A673 (cell line): ENCODE measurements at regions of chr7 and their contacts with region 1.

Region 1: GRCh38 chr7:77740257-77740656 is 44.0 kb downstream of the RSBN1L start:
- DNase-seq: no peak
- H3K4me3 ChIP-seq: no peak overlapping the region
- H3K27ac ChIP-seq: no peak overlapping the region
- H3K4me1 ChIP-seq: no peaks in the 10 kb centered on the region
- H3K27me3 ChIP-seq: no peaks in the 10 kb centered on the region
- CTCF ChIP-seq: no peak

Region 2: DNA sequence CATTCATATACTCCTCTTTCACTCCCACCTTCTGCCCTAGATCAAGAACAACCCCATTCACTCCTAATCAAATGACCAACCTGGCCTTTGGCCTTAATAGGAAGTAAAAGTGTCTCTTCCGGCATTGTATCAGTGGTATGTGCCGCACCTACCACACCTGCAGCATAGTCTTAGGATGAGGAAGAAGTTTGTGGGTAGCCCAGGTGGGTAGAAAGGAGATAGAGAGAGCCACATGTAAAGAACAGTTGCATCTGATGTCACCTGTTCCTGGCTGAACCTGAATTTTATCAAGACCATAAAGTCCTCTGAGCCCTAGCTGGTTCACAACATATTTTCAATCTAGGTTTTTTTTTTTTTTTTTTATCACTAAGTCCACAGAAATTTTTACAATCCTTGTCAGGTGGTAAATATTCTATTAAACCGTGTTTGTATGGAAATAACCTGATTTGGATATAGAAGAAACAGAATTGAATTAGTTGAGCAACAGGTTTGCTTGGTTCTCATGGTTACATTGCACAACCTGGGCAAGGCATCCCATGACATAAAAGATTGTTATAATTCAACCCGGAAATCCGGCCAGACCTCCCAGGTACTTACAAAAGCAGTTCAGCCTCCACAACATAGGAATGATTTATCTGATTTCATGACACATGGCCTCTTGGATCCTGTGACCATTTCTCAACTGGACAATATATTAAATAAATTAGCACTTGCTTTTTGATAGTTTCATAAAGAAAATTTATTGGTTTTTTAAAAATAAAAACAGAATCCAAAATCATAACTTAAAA is 258.4 kb before region 1 on chr7:
- CTCF ChIA-PET with region 1: no interaction called
- POLR2A ChIA-PET with region 1: no interaction called
- intact Hi-C with region 1: no loop called
- DNase-seq: peak; percentile 17
- H3K4me3 ChIP-seq: no peak overlapping the region
- H3K27ac ChIP-seq: no peak overlapping the region
- H3K4me1 ChIP-seq: no peaks in the 10 kb centered on the region
- H3K27me3 ChIP-seq: peaks cover 4% of the 10 kb centered on the region
- CTCF ChIP-seq: no peak

Region 3: GRCh38 chr7:77696198-77697028 is 43.8 kb before region 1 on chr7 and contains the start of gene RSBN1L:
- CTCF ChIA-PET with region 1: no interaction called
- POLR2A ChIA-PET with region 1: interaction called, 3 read pairs
- intact Hi-C with region 1: loop called (anchors 5 kb)
- DNase-seq: peak; percentile 98
- H3K4me3 ChIP-seq: peak within 1 kb of the TSS; percentile 97
- H3K27ac ChIP-seq: peak within 1 kb of the TSS; percentile 94
- H3K4me1 ChIP-seq: peaks cover 15% of the 10 kb centered on the region
- H3K27me3 ChIP-seq: no peaks in the 10 kb centered on the region
- CTCF ChIP-seq: peak; percentile 50
- total RNA-seq, gene RSBN1L: 22.4 and 23.2 TPM in 2 replicates

Region 4: DNA sequence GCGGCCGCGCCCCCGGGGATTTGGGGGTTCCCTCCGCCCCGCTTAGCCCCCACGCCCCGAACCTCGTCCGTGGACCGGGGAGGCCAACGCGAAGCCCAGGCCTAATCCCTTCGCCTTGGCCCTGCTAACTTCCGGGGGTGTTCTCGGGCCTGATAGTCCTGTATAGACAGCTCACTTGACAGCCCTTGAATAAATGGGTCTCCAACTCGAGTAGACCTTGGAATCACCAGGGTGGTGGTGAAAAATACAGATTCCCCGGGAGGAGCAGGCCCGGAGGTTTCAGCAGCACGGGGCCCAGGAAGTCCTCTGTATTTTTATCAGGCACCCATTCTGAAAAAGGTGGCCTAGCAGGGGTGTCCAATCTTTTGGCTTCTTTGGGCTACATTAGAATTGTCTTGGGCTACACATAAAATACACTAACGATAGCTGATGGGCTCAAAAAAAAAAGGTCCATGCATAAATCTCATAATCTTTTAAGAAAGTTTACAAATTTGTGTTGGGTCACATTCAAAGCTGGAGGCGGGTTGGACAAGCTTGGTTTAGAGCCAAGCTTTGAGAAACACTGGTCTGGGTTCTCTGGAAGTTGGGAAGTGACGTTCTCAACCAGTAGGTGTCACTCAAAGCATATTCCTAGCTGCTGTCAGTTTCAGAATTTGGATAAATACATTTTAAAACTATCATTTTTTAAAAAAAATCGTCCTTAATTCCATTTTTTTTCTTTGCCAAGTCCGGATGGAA is 280.0 kb after region 1 on chr7:
- CTCF ChIA-PET with region 1: no interaction called
- POLR2A ChIA-PET with region 1: no interaction called
- intact Hi-C with region 1: no loop called
- DNase-seq: peak; percentile 86
- H3K4me3 ChIP-seq: peak overlapping the region; percentile 54
- H3K27ac ChIP-seq: peak overlapping the region; percentile 3
- H3K4me1 ChIP-seq: peaks cover 13% of the 10 kb centered on the region
- H3K27me3 ChIP-seq: no peaks in the 10 kb centered on the region
- CTCF ChIP-seq: peak; percentile 85